ENCODE measurements at regions of chr9 and their contacts with region 1.

Region 1: DNA sequence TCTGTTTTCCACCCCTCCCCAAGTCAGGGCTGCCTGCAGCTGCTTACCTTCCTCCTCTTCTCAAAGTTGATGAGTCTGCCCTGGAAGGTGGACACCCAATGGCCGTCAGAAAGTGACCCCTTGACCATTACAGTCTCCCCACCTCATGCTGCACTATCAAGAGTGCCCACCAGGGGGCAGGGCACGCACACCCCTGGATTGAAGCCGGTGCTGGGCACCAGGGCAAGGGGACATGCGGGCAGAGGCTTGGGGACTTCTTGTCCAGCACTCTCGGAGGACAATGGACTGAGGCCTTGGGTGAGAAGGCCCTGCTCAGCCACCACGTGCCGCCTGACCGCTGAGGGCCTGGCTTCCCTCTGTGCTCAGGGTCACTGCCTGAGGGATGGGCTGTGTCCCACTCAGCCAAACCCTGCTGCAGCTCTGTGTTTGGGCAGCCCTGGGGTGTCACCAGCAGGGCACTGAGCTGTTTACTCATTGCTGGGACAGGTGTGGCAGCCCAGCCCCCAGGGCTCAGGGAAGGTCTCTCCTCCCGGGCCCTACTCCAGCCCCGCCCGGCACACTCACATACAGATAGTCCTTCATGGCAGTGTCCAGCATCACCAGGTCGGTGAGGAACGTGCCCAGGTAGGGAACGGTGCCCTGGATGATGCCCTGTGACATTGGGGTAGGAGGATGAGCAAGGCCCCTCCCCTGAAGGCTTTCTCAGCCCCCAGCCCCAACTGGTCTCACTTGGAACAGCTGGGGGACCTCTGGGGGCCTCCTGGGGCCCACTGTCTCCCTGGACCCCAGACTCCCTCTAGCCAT is 17.7 kb downstream of the RALGDS start:
- DNase-seq: peak in 4 of 5 donors; percentile 50 to 79 (median 77)
- H3K4me3 ChIP-seq: no peak overlapping the region
- H3K27ac ChIP-seq: peak overlapping the region in 1 of 2 donors; percentile 55
- H3K4me1 ChIP-seq: no peaks in the 10 kb centered on the region
- H3K27me3 ChIP-seq: no peaks in the 10 kb centered on the region
- CTCF ChIP-seq: peak; percentile 92 to 98 (median 98)
- EP300 ChIP-seq: no peak
- POLR2A ChIP-seq: no peak

Region 2: DNA sequence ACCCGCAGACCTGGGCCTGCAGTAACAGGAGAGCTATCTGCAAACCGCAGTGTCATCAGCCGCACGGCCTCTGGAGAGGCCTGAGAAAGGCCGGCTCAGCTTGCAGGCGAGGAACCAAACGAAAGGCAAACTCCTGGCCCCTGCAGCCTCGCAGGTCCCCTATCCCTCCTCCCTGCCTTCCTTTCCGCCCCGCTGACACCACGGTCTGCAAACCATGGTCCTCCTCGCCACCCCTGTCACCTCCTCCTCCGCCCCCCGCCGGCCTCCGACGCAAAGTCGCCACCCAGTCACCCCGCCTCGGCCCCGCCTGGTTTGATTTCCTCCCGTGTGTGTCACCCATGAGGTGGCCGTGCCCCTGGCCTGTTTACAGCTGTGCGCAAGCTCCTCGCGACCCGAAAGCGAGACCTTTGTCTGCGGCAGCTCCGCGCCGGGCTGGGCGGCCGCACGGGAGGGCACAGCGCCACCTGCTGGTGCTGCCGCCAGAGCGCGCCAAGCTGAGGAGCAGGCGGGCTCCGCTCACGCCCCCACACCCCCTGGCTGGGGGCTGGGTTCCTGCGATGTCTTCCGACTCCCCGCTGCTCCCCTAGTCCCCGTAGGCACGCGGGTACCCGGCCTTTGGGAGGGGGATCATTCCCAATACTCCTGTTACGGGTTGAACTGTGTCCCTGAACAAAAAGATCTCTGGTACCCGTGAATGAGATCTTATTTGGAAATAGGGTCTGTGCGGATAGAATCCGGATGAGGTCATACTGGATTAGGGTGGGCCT is 40.9 kb after region 1 on chr9:
- intact Hi-C with region 1: loop called (anchors 2 kb)
- DNase-seq: peak in 4 of 5 donors; percentile 73 to 79 (median 75)
- H3K4me3 ChIP-seq: peak overlapping the region; percentile 38
- H3K27ac ChIP-seq: no peak overlapping the region
- H3K4me1 ChIP-seq: peaks cover 14% of the 10 kb centered on the region
- H3K27me3 ChIP-seq: no peaks in the 10 kb centered on the region
- CTCF ChIP-seq: peak; percentile 98 to 99 (median 98)
- EP300 ChIP-seq: no peak
- POLR2A ChIP-seq: peak; percentile 22

Region 3: DNA sequence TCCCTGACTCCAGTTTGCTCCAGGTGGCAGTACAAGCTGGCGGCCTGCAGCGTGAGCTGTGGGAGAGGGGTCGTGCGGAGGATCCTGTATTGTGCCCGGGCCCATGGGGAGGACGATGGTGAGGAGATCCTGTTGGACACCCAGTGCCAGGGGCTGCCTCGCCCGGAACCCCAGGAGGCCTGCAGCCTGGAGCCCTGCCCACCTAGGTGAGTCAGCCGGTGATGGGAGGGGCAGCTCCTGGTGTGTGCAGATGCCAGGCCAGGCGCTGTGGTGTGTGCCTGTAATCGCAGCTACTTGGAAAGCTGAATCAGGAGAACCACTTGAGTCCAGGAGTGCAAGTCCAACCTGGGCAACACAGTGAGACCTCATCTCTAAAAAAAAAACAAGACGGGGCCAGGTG is 346.4 kb after region 1 on chr9:
- intact Hi-C with region 1: no loop called
- DNase-seq: no peak
- H3K4me3 ChIP-seq: no peak overlapping the region
- H3K27ac ChIP-seq: no peak overlapping the region
- H3K4me1 ChIP-seq: no peaks in the 10 kb centered on the region
- H3K27me3 ChIP-seq: no peaks in the 10 kb centered on the region
- CTCF ChIP-seq: no peak
- EP300 ChIP-seq: no peak
- POLR2A ChIP-seq: no peak

Measured in ovary (tissue), 10 donors.